ENCODE measurements at regions of chr1 and their contacts with region 1.

Region 1: GRCh38 chr1:20430355-20431175 is 55.4 kb downstream of the CAMK2N1 start:
- DNase-seq: peak; percentile 85
- ATAC-seq: peak; percentile 97
- H3K4me3 Mint-ChIP-seq: no peak overlapping the region
- H3K27ac Mint-ChIP-seq: no peak overlapping the region
- H3K4me1 Mint-ChIP-seq: peaks cover 12% of the 10 kb centered on the region
- H3K27me3 Mint-ChIP-seq: peaks cover 42% of the 10 kb centered on the region
- CTCF ChIP-seq: peak; percentile 97

Region 2: DNA sequence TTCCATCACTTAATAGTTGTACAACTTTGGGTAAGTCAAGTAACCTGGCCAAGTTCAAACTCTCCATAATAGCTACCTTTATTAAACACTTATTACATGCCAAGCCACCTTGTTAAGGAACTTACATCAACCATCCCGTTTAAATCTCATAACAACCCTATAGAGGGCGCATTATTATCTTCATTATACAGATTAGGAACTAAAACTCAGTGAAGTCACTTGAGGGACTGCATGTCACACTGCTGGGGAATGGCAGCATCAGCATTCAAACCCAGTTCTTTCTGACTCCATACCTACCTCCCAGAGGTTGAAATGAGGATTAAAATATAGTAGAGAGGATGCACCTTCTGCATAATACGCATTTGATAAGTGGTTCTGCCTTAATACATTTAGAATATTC is 197.2 kb before region 1 on chr1:
- CTCF ChIA-PET with region 1: no interaction called
- POLR2A ChIA-PET with region 1: no interaction called
- DNase-seq: no peak
- ATAC-seq: peak; percentile 57
- H3K4me3 Mint-ChIP-seq: no peak overlapping the region
- H3K27ac Mint-ChIP-seq: no peak overlapping the region
- H3K4me1 Mint-ChIP-seq: peaks cover 28% of the 10 kb centered on the region
- H3K27me3 Mint-ChIP-seq: no peaks in the 10 kb centered on the region; the same call in 1 of the 2 replicates
- CTCF ChIP-seq: no peak

Region 3: DNA sequence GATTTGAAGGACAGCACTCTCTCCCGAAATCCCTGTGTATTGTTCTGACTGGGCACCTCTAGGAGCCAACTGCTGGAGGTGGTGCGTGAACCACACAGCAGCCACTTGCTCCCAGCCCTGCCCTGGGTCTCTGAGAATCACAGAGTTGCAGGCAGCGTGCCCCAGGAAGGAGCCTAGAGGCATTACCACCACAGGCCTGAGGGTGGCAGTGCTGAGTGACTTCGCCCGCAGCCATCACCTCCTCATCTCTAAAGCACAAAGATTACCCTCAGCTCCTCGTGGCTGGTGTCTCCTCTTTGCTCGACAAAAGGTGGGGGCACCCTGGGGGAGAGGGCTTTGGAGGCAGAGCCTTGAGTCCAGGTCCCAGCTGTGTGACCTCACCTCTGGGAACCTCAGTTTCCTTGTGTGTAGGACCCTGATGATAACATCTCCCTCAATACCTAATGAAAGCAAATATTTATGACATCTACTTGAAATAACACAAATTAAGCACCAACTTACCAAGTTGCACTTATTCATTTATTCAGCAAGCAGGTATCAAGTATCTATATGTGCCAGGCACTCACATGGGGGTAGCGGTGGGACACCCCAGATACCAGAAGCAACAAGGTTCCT is 53.6 kb before region 1 on chr1:
- CTCF ChIA-PET with region 1: interaction called, 17 read pairs
- POLR2A ChIA-PET with region 1: no interaction called
- DNase-seq: peak; percentile 85
- ATAC-seq: peak; percentile 96
- H3K4me3 Mint-ChIP-seq: no peak overlapping the region
- H3K27ac Mint-ChIP-seq: no peak overlapping the region
- H3K4me1 Mint-ChIP-seq: 0 out of 2 replicates have a peak, but pooled peaks cover 6% of the 10 kb centered on the region
- H3K27me3 Mint-ChIP-seq: peaks cover 62% of the 10 kb centered on the region
- CTCF ChIP-seq: peak; percentile 67

Region 4: GRCh38 chr1:20446796-20447195 is 16.2 kb after region 1 on chr1:
- CTCF ChIA-PET with region 1: interaction called, 11 read pairs
- POLR2A ChIA-PET with region 1: no interaction called
- DNase-seq: no peak
- ATAC-seq: no peak
- H3K4me3 Mint-ChIP-seq: no peak overlapping the region
- H3K27ac Mint-ChIP-seq: no peak overlapping the region
- H3K4me1 Mint-ChIP-seq: peaks cover 15% of the 10 kb centered on the region
- H3K27me3 Mint-ChIP-seq: peaks cover 3% of the 10 kb centered on the region; the same call in 1 of the 2 replicates
- CTCF ChIP-seq: no peak

Region 5: GRCh38 chr1:20485527-20486456 is 55.2 kb after region 1 on chr1 and contains the start of gene CAMK2N1:
- CTCF ChIA-PET with region 1: interaction called, 55 read pairs
- POLR2A ChIA-PET with region 1: interaction called, 3 read pairs
- DNase-seq: peak; percentile 65
- ATAC-seq: peak; percentile 20
- H3K4me3 Mint-ChIP-seq: peak within 1 kb of the TSS; percentile 89
- H3K27ac Mint-ChIP-seq: peak within 1 kb of the TSS; percentile 79
- H3K4me1 Mint-ChIP-seq: peaks cover 46% of the 10 kb centered on the region
- H3K27me3 Mint-ChIP-seq: peaks cover 80% of the 10 kb centered on the region
- CTCF ChIP-seq: no peak
- total RNA-seq, gene CAMK2N1: 10.0 to 10.9 TPM (median 10.1 TPM) in 3 replicates

Region 6: DNA sequence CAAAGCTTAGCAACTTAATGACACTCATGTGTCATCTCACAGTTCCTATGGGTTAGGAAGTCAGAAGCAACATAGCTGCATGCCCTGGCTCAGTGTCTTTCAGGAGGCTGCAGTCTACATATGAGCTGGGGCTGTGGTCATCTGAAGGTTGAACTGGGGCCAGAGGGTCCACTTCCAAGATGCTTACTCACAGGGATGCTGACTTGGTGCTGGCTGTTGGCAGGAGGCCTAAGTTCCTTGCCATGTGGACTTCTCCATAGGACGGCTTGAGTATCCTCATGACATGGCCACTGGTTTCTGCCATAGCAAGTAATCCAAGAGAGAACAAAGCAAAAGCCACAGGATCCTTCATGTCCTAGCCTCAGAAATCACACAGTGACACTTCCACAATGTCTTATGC is 109.7 kb after region 1 on chr1:
- CTCF ChIA-PET with region 1: no interaction called
- POLR2A ChIA-PET with region 1: no interaction called
- DNase-seq: no peak
- ATAC-seq: no peak
- H3K4me3 Mint-ChIP-seq: no peak overlapping the region
- H3K27ac Mint-ChIP-seq: no peak overlapping the region
- H3K4me1 Mint-ChIP-seq: no peaks in the 10 kb centered on the region
- H3K27me3 Mint-ChIP-seq: peaks cover 30% of the 10 kb centered on the region
- CTCF ChIP-seq: no peak